Left cardiac atrium (tissue), 4 donors: ENCODE measurements at regions of chr15 and their contacts with region 1.

Region 1: DNA sequence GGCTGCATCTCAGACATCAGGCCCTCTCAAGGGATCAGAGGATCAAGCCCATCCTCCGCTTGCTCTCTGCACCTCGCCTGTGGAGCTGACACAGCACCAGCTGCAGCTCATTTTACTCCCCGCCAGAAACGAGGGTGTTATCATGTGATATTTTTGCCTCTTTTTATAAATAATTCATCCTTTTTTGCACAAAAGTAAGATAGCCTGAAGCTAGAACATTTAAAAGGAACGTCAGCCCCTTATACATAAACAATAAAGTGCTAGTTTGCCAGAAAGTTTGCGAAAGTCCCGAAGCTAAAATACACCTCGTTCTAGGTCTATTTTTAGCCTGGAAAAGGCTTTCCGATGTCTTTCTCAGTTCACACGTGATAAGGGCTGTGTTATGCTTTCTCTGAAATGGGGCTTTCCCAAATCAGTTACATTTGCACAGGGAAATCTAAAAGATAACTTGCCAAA is 9.6 kb upstream of the FAM174B start:
- DNase-seq: no peak
- ATAC-seq: peak; percentile 56

Region 2: GRCh38 chr15:92617549-92618520 is 47.3 kb before region 1 on chr15:
- intact Hi-C with region 1: loop called in 1 of 2 experiments (anchors 5 kb)
- DNase-seq: peak; percentile 78
- ATAC-seq: peak; percentile 82 to 97

Region 3: GRCh38 chr15:92724144-92724543 is 59.0 kb after region 1 on chr15:
- intact Hi-C with region 1: no loop called
- DNase-seq: no peak
- ATAC-seq: no peak

Region 4: GRCh38 chr15:92820236-92821021 is 155.3 kb after region 1 on chr15:
- intact Hi-C with region 1: no loop called
- DNase-seq: peak; percentile 93
- ATAC-seq: peak; percentile 98 to 99